ENCODE measurements at regions of chr10 and their contacts with region 1.

Region 1: DNA sequence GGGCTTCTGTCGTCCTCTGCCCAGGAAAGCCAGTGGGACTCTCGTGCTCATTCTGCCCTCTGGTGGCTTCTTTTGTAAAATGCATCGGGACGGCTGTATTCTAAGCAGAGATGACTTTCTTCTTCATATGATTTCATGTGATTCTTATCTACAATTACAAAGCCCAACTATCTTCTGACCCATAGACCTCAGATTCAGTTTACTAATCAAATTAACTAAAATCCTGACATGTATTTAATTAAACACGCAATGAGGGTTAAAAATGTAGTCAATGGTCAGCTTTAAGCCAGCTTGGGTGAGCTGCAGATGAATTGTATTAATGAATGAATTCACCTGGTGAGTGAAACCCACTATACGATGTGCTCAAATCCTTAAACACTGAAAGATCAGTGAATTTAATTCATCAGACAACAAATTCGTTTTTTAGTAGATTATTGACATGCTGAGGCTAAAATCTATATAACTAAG is 117.6 kb upstream of the FAM204A start:
- DNase-seq: peak; percentile 41
- CTCF ChIP-seq: peak; percentile 50

Region 2: GRCh38 chr10:117496616-117497028 is 963.1 kb before region 1 on chr10:
- in situ Hi-C with region 1: loop called (anchors 25 kb)
- DNase-seq: peak; percentile 80
- CTCF ChIP-seq: peak; percentile 99

Region 3: GRCh38 chr10:118511711-118512110 is 52.0 kb after region 1 on chr10:
- in situ Hi-C with region 1: no loop called
- DNase-seq: no peak
- CTCF ChIP-seq: no peak